GM10248 (cell line): ENCODE measurements at regions of chr18 and their contacts with region 1.

Region 1: GRCh38 chr18:35835833-35836232 is 136.6 kb upstream of the RMP24 start:
- DNase-seq: peak; percentile 13
- CTCF ChIP-seq: no peak

Region 2: GRCh38 chr18:35808796-35809195 is 27.0 kb before region 1 on chr18:
- CTCF ChIA-PET with region 1: interaction called, 12 read pairs
- POLR2A ChIA-PET with region 1: no interaction called
- DNase-seq: no peak
- CTCF ChIP-seq: no peak